H1 (cell line): ENCODE measurements at regions of chr20 and their contacts with region 1.

Region 1: GRCh38 chr20:58131551-58132142 is 96.8 kb downstream of the ANKRD60 start:
- DNase-seq: peak in 1 of 2 experiments; percentile 30
- H3K4me3 ChIP-seq: peak overlapping the region in 1 of 4 experiments; percentile 13; a peak in 1 of 8 replicates
- H3K27ac ChIP-seq: no peak overlapping the region
- H3K4me1 ChIP-seq: peaks cover 6 to 9% (median 8%) of the 10 kb centered on the region in 4 experiments; a peak in 6 of 7 replicates
- H3K27me3 ChIP-seq: no peaks in the 10 kb centered on the region; a peak in 1 of 7 replicates
- CTCF ChIP-seq: no peak
- EP300 ChIP-seq: no peak
- POLR2A ChIP-seq: no peak
- RAD21 ChIP-seq: no peak

Region 2: DNA sequence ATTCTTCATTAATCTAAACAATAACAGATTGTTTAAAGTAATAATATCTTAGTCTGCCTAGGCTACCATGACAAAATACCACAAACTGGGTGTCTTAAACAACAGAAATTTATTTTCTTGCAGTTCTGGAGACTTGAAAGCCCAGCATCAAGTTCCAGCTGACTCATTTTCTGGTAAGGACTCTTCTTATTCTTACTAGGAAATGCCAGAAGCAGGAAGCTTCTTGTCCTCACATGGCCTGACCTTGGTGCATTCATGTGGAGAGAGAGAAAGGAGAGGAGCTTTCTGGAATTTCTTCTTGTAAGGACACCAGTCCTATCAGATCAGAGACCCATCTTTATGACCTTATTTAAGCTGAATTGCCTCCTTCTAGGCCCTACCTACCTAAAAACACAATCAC is 13.7 kb before region 1 on chr20:
- CTCF ChIA-PET with region 1: interaction called, 16 read pairs
- POLR2A ChIA-PET with region 1: no interaction called
- DNase-seq: no peak
- H3K4me3 ChIP-seq: no peak overlapping the region
- H3K27ac ChIP-seq: no peak overlapping the region
- H3K4me1 ChIP-seq: no peaks in the 10 kb centered on the region
- H3K27me3 ChIP-seq: no peaks in the 10 kb centered on the region; a peak in 2 of 7 replicates
- CTCF ChIP-seq: no peak
- EP300 ChIP-seq: no peak
- POLR2A ChIP-seq: no peak
- RAD21 ChIP-seq: no peak

Region 3: GRCh38 chr20:58146081-58146745 is 14.6 kb after region 1 on chr20:
- CTCF ChIA-PET with region 1: interaction called, 13 read pairs
- POLR2A ChIA-PET with region 1: interaction called, 3 read pairs
- DNase-seq: no peak
- H3K4me3 ChIP-seq: no peak overlapping the region
- H3K27ac ChIP-seq: no peak overlapping the region
- H3K4me1 ChIP-seq: peaks cover 0 to 9% (median under 1%) of the 10 kb centered on the region in 4 experiments; a peak in 3 of 7 replicates
- H3K27me3 ChIP-seq: peaks cover 0 to 10% (median 2%) of the 10 kb centered on the region in 4 experiments; a peak in 5 of 7 replicates
- CTCF ChIP-seq: no peak
- EP300 ChIP-seq: no peak
- POLR2A ChIP-seq: no peak
- RAD21 ChIP-seq: no peak

Region 4: GRCh38 chr20:58155148-58155925 is 23.7 kb after region 1 on chr20:
- CTCF ChIA-PET with region 1: interaction called, 11 read pairs
- POLR2A ChIA-PET with region 1: no interaction called
- DNase-seq: no peak
- H3K4me3 ChIP-seq: no peak overlapping the region
- H3K27ac ChIP-seq: no peak overlapping the region
- H3K4me1 ChIP-seq: peaks cover 0 to 3% (median 0%) of the 10 kb centered on the region in 4 experiments; a peak in 3 of 7 replicates
- H3K27me3 ChIP-seq: peaks cover 0 to 4% (median 0%) of the 10 kb centered on the region in 4 experiments; a peak in 2 of 7 replicates
- CTCF ChIP-seq: peak; percentile 27 to 63 (median 39); a peak in 3 of 4 replicates
- EP300 ChIP-seq: no peak
- POLR2A ChIP-seq: no peak
- RAD21 ChIP-seq: peak; percentile 33 to 36